PC-9 (cell line): ENCODE measurements at regions of chrX and their contacts with region 1.

Region 1: DNA sequence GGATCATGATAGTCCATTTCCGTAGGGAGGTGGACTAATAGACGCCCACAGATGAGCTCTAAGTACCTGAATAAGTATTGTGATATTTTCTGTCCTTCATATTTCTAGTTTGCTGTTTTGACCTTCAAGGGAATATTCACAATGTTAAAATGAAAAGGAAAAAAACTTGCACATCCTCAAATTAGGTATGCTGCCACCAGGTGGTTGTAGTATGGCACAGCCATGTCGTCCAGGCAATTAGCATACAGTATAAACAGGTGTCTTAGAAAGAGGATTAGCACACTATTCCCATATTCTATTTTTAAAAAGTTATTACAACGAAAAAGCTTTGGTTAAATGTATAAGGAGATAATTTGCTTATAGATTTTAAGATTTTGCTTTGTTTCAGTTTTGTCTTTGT is 802.0 kb downstream of the RPA4 start:
- DNase-seq: peak in 1 of 2 experiments; percentile 8
- H3K4me3 ChIP-seq: no peak overlapping the region
- H3K27ac ChIP-seq: no peak overlapping the region
- H3K4me1 ChIP-seq: no peaks in the 10 kb centered on the region
- H3K27me3 ChIP-seq: no peaks in the 10 kb centered on the region
- CTCF ChIP-seq: peak; percentile 77

Region 2: GRCh38 chrX:97026406-97026805 is 659.3 kb before region 1 on chrX:
- CTCF ChIA-PET with region 1: no interaction called
- POLR2A ChIA-PET with region 1: no interaction called
- intact Hi-C with region 1: loop called (anchors 10 kb)
- DNase-seq: no peak
- H3K4me3 ChIP-seq: no peak overlapping the region
- H3K27ac ChIP-seq: no peak overlapping the region
- H3K4me1 ChIP-seq: no peaks in the 10 kb centered on the region
- H3K27me3 ChIP-seq: no peaks in the 10 kb centered on the region
- CTCF ChIP-seq: no peak

Region 3: DNA sequence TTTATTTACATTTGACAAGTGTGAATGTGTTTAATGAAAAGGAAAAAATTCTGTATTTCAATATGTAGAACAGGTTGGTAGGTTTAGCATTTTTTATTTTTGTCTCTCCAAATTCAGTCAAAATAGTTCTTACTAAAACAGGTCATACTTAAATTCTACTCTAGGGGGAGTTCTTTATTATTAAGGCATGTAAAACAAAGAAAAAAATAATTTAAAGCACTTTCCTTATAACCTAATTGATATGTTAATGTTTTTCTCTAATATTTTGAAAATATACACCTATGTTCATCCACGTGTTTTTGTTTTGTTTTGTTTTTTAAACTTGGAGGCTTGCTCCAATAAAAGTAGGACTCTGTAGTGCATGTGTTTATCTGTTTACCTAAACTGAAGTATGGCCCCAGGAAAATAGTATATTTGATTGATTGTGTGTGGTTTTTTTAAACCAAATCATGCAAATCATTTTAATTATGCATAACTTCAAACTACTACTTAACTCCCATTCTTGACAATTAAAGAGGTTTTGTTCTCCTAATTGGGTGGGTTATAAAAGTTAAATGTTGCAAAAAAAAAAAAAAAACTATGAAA is 239.4 kb before region 1 on chrX:
- CTCF ChIA-PET with region 1: no interaction called
- POLR2A ChIA-PET with region 1: no interaction called
- intact Hi-C with region 1: loop called (anchors 5 kb)
- DNase-seq: no peak
- H3K4me3 ChIP-seq: no peak overlapping the region
- H3K27ac ChIP-seq: no peak overlapping the region
- H3K4me1 ChIP-seq: no peaks in the 10 kb centered on the region
- H3K27me3 ChIP-seq: no peaks in the 10 kb centered on the region
- CTCF ChIP-seq: peak; percentile 52

Region 4: GRCh38 chrX:97498093-97498492 is 187.7 kb before region 1 on chrX:
- CTCF ChIA-PET with region 1: no interaction called
- POLR2A ChIA-PET with region 1: no interaction called
- intact Hi-C with region 1: no loop called
- DNase-seq: no peak
- H3K4me3 ChIP-seq: no peak overlapping the region
- H3K27ac ChIP-seq: no peak overlapping the region
- H3K4me1 ChIP-seq: no peaks in the 10 kb centered on the region
- H3K27me3 ChIP-seq: no peaks in the 10 kb centered on the region
- CTCF ChIP-seq: no peak

Region 5: DNA sequence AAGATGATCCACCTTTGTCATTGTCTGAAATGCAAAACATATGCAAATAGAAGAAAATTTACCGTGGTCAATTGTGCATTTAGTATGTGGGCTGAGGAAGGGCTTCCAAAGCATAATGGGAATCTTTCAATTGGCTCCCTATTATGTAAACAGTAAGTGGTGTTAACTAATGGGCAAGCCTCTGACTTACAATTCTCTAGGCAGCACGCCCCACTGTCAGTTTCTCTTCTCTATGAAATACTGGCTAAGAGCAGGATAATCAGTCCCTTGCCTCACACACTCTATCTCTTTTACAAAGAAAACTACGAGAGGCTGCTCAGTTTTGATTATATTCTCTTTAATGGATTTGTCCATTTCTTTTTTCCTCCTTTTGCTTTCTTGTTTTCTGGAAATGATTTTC is 1451.7 kb after region 1 on chrX:
- CTCF ChIA-PET with region 1: no interaction called
- POLR2A ChIA-PET with region 1: no interaction called
- intact Hi-C with region 1: no loop called
- DNase-seq: no peak
- H3K4me3 ChIP-seq: no peak overlapping the region
- H3K27ac ChIP-seq: no peak overlapping the region
- H3K4me1 ChIP-seq: no peaks in the 10 kb centered on the region
- H3K27me3 ChIP-seq: no peaks in the 10 kb centered on the region
- CTCF ChIP-seq: no peak